Kidney (tissue), 22 donors: ENCODE measurements at regions of chr9 and their contacts with region 1.

Region 1: GRCh38 chr9:35790385-35791296 is 750 bp upstream of the NPR2 start:
- DNase-seq: peak; percentile 81 to 94 (median 86)
- H3K4me3 ChIP-seq: no peak overlapping the region
- H3K27ac ChIP-seq: no peak overlapping the region
- H3K4me1 ChIP-seq: peaks cover 0 to 9% (median 3%) of the 10 kb centered on the region in 3 donors
- H3K27me3 ChIP-seq: no peaks in the 10 kb centered on the region
- CTCF ChIP-seq: peak; percentile 91

Region 2: DNA sequence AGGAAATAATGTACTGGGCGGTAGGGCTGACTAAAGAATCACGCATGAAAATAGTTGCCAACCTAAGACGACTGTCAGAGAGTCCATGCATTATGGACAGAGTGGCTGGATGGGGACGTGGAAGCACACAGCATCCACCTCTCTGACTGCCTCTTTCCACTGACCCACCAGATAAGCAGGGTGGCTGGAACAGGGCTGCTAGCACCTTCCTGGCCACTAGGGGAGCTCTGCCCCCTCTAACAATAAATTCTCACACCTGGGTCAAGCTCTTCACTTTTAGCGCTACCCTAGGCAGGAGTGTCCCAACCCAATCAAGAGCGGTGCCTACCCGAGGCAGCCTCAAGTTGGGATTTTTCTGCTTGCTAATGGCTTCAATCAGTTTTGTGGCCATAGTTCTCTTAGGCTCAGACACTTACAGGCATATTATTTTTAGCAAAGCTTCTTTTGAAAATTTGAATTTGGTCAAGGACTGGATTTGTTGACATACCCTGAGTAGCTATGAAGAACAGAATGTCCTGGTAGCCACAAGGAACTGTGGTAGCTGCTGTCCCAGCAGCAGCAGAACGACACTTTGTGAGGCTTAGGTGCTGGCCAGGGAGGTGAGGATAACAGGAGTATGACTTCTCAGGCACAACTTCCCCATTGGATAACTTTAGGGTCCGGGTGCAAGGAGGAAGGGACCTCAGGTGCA is 94.0 kb before region 1 on chr9:
- intact Hi-C with region 1: no loop called
- DNase-seq: peak in 4 of 5 donors; percentile 47 to 59 (median 54)
- H3K4me3 ChIP-seq: no peak overlapping the region
- H3K27ac ChIP-seq: no peak overlapping the region
- H3K4me1 ChIP-seq: peaks cover 0 to 2% (median 0%) of the 10 kb centered on the region in 3 donors
- H3K27me3 ChIP-seq: no peaks in the 10 kb centered on the region
- CTCF ChIP-seq: peak; percentile 81

Region 3: GRCh38 chr9:35882263-35882848 is 91.7 kb after region 1 on chr9:
- intact Hi-C with region 1: loop called (anchors 5 kb)
- DNase-seq: peak; percentile 74 to 88 (median 82)
- H3K4me3 ChIP-seq: no peak overlapping the region
- H3K27ac ChIP-seq: no peak overlapping the region
- H3K4me1 ChIP-seq: no peaks in the 10 kb centered on the region
- H3K27me3 ChIP-seq: no peaks in the 10 kb centered on the region
- CTCF ChIP-seq: peak; percentile 89